Activated CD4-positive, alpha-beta T cell treated with anti-CD3 and anti-CD28 coated beads for 36 hours (primary cell): ENCODE measurements at regions of chr1 and their contacts with region 1.

Region 1: DNA sequence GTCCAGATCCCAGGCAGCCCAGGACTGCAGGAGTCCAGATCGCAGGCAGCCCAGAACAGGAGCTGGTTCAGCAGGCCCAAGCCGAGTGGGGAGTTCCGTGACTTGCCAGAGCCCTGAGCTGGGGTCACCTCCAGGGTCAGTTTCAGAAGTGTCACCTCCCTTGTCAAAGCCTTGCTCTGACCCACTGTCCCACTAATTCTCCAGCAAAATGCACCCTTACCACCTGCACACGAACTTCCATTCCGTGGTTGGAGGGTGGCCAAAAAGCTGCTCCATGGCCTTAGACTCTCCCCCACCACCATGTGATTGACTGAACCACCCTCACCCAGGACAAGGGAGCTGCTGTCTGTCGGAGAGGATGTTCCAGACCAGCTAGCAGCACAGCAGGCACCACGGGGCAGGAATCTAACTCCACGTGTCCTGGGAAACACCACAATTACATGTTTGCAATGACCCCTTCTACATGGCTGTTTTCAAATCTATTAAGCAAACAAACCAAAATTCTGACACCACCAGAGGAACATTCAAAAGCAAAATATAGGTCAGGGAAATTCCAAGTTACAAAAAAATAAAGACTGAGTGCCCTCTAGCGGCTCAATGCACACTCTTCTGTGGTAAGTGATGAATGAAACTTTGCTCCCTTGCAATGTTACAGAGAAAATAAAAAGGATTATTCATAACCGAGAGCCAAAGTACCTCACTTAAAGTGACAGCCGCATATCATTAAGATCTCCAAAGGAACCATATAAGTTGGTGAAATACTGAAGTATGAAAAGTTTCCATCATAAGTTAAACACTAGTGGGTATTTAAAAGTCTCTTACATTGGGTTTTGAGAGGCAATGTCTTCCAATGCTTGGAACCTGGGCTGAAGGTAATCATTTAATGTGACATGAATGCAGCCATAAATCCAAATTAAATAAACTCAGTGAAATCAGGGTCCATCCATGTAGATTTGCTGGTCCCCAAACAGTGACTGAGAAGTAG is 76.3 kb downstream of the NPHP4 start:
- DNase-seq: peak; percentile 60
- ATAC-seq: peak; percentile 95
- H3K4me3 Mint-ChIP-seq: no peak overlapping the region
- H3K27ac Mint-ChIP-seq: no peak overlapping the region
- H3K4me1 Mint-ChIP-seq: peaks cover 8% of the 10 kb centered on the region
- H3K27me3 Mint-ChIP-seq: no peaks in the 10 kb centered on the region

Region 2: DNA sequence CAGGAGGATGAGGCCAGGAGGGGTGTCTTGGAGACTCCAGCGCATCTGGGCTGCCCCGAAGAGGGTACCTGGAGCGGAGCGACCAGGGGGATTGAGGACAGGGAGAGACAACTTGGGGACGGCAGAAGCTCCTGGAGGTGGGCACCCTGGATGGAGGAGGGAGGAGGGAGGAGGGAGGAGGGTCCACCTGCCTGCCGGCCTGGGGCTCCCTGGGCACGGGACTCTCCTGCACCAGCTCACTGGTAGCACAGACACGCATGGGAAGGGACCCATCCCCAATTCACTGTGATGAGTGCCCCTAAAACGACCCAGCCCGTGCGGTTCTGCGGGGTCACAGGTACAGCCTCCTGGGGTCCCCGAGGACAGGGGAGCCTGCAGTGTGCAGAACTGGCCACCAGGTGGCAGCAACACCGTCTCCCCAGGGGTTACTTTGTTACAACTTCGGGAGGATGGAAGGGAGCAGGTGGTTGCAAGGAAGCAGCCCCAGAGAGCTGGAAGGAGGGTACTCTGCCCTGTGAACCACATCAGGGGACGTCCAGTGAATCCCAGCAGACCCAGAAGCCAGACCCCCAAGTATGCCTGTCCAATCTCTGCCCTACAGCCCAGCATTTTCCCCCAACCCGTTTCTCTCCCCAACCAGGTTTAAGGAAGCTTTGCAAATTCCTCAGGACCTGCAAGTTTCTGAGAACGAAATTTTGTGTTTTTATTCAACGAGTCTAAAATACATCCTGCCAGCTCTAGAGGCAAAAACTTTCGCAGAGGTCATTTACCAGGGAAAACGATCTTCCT is 406.0 kb before region 1 on chr1:
- CTCF ChIA-PET with region 1: interaction called, 3 read pairs
- POLR2A ChIA-PET with region 1: no interaction called
- intact Hi-C with region 1: loop called (anchors 1 kb)
- DNase-seq: peak; percentile 82
- ATAC-seq: peak; percentile 60
- H3K4me3 Mint-ChIP-seq: no peak overlapping the region
- H3K27ac Mint-ChIP-seq: no peak overlapping the region
- H3K4me1 Mint-ChIP-seq: peaks cover 2% of the 10 kb centered on the region
- H3K27me3 Mint-ChIP-seq: peaks cover 6% of the 10 kb centered on the region

Region 3: DNA sequence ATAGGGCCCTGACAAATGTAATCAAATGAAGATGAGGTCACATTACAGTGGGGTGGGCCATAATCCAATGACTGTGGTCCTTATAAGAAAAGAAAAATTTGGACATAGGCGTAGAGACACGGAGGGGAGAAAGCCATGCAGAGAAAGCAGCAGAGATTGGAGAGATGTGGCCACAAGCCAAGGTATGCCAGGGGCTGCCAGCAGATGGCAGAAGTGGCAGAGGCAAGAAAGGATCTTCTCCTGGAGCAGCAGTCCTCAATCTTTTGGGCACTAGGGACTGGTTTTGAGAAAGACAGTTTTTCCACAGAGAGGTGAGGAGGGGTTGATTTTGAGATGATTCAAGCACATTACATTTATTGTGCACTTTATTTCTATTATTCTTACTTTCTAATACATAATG is 278.7 kb before region 1 on chr1:
- CTCF ChIA-PET with region 1: no interaction called
- POLR2A ChIA-PET with region 1: no interaction called
- intact Hi-C with region 1: loop called in 1 of 2 experiments (anchors 1 kb)
- DNase-seq: peak; percentile 49
- ATAC-seq: no peak
- H3K4me3 Mint-ChIP-seq: no peak overlapping the region
- H3K27ac Mint-ChIP-seq: no peak overlapping the region
- H3K4me1 Mint-ChIP-seq: no peaks in the 10 kb centered on the region
- H3K27me3 Mint-ChIP-seq: peaks cover 19% of the 10 kb centered on the region

Region 4: DNA sequence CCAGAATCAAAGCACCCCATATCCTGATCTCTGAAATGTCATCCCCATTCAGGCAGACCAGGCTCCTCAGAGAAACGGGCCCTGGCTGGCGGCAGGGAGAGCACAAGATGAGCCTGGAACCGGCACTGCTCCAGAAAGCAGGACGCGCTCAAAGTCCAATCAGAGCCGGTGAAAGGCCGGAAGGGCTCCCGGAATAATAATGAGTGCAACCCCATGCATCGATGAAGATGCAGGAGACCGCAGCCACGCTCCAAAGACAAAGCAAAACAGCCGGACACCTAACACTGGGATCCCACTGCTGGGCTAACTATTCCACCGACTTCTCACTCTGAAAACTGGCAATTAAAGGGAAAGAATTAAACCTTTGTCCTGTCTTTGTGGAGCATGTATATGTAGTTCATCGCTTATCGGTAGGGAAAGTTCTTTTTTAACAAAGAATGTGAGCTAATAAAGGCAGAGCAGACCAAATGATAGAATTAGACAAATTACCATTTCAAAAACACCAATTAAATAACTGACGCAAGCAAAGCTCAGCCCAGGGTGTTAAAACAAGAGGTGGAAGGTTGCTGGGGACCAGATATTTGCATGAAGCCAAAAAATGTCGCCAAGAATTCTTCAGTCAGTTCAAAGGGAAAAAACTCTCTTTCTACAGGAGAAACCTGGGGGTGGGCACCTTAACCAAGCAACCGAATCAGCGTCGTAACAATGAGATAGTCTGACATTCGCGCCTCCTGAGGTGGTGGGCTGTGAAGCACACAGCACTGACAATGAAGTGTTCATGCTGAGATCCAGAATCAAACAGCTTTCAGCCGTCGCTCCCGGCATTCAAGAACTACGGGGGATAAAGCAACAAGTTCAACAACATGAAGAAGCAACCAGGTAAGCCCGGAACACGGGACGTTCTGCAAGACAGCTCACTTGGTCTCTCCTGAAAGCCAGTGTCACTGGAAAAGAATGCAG is 18.9 kb before region 1 on chr1:
- CTCF ChIA-PET with region 1: no interaction called
- POLR2A ChIA-PET with region 1: no interaction called
- intact Hi-C with region 1: no loop called
- DNase-seq: no peak
- ATAC-seq: no peak
- H3K4me3 Mint-ChIP-seq: no peak overlapping the region
- H3K27ac Mint-ChIP-seq: no peak overlapping the region
- H3K4me1 Mint-ChIP-seq: no peaks in the 10 kb centered on the region
- H3K27me3 Mint-ChIP-seq: no peaks in the 10 kb centered on the region

Region 5: GRCh38 chr1:6205849-6206519 is 290.1 kb after region 1 on chr1 and contains the start of gene RNF207:
- CTCF ChIA-PET with region 1: no interaction called
- POLR2A ChIA-PET with region 1: no interaction called
- intact Hi-C with region 1: no loop called
- DNase-seq: peak; percentile 85
- ATAC-seq: peak; percentile 75
- H3K4me3 Mint-ChIP-seq: peak within 1 kb of the TSS; percentile 77
- H3K27ac Mint-ChIP-seq: peak within 1 kb of the TSS; percentile 67
- H3K4me1 Mint-ChIP-seq: peaks cover 3% of the 10 kb centered on the region
- H3K27me3 Mint-ChIP-seq: peaks cover 8% of the 10 kb centered on the region
- total RNA-seq, gene RNF207: 13.5 to 15.2 TPM